Adrenal gland (tissue), 19 donors: ENCODE measurements at regions of chr9 and their contacts with region 1.

Region 1: DNA sequence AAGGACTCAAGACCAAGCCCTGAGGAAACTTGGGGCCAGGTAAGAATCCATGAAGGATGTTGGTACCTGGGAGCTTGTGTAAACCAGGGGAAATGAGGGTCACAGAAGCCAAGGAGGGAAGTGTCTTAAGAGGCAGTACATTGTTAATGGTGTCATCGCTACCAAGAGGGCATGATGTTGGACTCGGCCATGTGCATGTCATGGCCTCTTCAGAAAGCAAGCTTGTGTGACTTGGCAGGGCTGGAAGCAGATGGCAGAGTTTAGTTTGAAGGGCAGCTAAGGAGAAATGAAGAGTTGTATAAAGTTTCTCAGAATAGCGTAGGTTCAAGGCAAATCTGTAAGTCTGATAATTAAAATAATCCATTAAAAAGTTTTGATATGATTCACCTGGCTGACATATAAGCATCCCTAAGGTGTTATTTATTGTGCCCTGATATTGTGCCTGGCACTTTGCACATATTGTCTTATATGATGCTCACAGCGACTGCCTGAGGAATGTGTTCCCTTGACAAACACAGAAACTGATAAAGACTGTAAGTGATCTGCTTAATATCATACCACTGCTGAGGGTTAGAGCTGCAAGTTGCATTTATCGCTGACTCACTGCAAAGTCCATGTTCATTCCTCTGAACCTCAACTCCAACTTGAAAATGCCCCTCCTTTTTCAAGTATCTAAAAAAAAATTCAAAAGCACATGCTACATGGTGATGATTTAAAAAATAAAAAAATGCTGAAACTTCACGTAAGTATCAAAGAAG is 81.3 kb upstream of the PTPN3 start:
- DNase-seq: no peak
- H3K4me3 ChIP-seq: no peak overlapping the region
- H3K27ac ChIP-seq: no peak overlapping the region
- H3K4me1 ChIP-seq: no peaks in the 10 kb centered on the region
- H3K27me3 ChIP-seq: no peaks in the 10 kb centered on the region
- CTCF ChIP-seq: no peak
- POLR2A ChIP-seq: no peak

Region 2: GRCh38 chr9:109766336-109766735 is 187.0 kb after region 1 on chr9:
- intact Hi-C with region 1: no loop called
- DNase-seq: peak; percentile 38 to 76 (median 60)
- H3K4me3 ChIP-seq: no peak overlapping the region
- H3K27ac ChIP-seq: peak overlapping the region in 3 of 5 donors; percentile 10 to 87 (median 44)
- H3K4me1 ChIP-seq: no peaks in the 10 kb centered on the region
- H3K27me3 ChIP-seq: no peaks in the 10 kb centered on the region
- CTCF ChIP-seq: no peak
- POLR2A ChIP-seq: no peak

Region 3: DNA sequence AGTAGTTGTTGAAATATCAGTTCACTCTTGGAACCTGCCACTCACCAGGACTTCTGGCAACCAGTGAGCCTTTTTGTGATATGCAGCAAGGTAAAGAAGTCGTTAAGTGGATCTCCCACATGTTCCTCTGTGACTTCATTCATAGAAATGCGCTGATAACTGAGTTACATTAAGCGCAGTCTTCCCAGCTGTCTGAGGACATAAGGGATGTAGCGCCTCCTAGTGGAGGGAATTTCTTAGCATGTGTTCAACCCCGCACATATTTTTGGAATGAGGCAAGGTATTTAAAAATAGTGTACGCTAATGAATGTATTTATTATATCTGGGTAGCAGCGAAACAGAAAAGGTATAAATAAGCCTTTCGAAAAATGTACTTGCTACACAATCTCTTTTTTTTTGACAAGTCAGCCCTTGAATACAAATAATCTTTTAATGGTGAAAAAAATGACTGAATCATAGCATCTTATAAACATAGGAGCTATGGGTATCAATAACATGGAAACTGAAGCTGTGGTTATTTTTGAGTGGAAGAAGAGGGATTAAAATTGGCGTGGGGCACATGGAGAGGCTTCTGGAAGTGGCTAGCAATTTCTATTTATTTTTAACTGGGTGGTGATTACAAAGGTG is 238.6 kb after region 1 on chr9:
- intact Hi-C with region 1: loop called (anchors 2 to 5 kb)
- DNase-seq: peak; percentile 75 to 92 (median 83)
- H3K4me3 ChIP-seq: no peak overlapping the region
- H3K27ac ChIP-seq: peak overlapping the region in 3 of 5 donors; percentile 8 to 62 (median 30)
- H3K4me1 ChIP-seq: peaks cover 0 to 6% of the 10 kb centered on the region in 2 donors
- H3K27me3 ChIP-seq: no peaks in the 10 kb centered on the region
- CTCF ChIP-seq: peak; percentile 88 to 95 (median 93)
- POLR2A ChIP-seq: no peak

Region 4: DNA sequence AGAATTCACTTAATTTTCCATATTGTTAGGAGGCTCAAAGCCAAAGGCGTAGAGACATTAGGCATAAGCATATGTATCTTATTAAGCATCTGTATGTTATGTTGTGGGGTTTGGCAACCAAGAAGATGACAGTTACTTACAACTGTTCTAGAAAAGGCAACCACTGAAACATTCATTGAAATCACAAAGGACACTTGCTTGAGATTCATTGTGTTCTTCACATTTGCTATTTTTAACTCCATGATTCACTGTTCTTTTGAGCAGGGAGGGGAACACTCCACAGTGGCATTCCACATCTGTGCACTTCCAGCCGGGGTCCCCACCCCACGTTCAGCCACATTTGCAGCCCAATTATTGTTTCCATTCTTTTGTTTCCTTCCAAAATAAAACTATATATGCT is 307.7 kb after region 1 on chr9:
- intact Hi-C with region 1: loop called in 1 of 2 experiments (anchors 5 kb)
- DNase-seq: no peak
- H3K4me3 ChIP-seq: no peak overlapping the region
- H3K27ac ChIP-seq: peak overlapping the region in 1 of 5 donors; percentile 4
- H3K4me1 ChIP-seq: peaks cover 0 to 10% of the 10 kb centered on the region in 2 donors
- H3K27me3 ChIP-seq: no peaks in the 10 kb centered on the region
- CTCF ChIP-seq: no peak
- POLR2A ChIP-seq: no peak

Region 5: DNA sequence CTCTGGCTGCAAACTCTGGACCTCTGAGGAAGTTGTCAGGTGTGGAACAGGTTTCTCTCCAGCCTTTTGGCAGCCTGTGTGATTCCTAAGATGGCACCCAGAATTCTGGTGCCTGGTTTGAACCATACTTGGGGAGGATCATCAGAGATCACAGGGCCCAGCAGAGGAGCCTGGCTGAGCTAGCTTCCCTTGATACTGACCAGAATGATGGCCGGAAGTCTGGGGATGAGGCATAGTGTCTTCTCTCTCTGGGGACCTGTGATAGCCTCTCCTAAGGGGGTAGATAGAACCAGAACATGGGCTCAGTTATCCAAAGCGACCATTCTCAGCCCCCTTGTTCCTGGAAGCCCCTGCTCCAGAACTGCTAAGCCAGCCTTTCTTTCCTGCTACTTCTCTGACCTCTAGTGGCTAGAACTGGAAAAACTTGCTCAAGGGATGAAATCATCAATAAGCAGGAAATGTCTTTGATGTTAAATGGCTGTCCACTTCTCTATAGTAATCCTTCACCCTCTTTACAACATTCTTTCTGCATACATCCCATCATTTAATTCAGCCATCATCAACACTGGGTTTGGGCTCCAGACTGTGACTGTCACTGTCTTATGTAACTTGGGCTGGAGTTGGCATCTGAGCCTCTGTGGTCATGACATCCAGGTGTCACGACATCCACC is 573.5 kb after region 1 on chr9:
- intact Hi-C with region 1: loop called (anchors 10 kb)
- DNase-seq: no peak
- H3K4me3 ChIP-seq: no peak overlapping the region
- H3K27ac ChIP-seq: no peak overlapping the region
- H3K4me1 ChIP-seq: peaks cover 0 to 12% of the 10 kb centered on the region in 2 donors
- H3K27me3 ChIP-seq: no peaks in the 10 kb centered on the region
- CTCF ChIP-seq: peak; percentile 51 to 82 (median 71)
- POLR2A ChIP-seq: no peak